Ovary (tissue), 10 donors: ENCODE measurements at regions of chr1 and their contacts with region 1.

Region 1: DNA sequence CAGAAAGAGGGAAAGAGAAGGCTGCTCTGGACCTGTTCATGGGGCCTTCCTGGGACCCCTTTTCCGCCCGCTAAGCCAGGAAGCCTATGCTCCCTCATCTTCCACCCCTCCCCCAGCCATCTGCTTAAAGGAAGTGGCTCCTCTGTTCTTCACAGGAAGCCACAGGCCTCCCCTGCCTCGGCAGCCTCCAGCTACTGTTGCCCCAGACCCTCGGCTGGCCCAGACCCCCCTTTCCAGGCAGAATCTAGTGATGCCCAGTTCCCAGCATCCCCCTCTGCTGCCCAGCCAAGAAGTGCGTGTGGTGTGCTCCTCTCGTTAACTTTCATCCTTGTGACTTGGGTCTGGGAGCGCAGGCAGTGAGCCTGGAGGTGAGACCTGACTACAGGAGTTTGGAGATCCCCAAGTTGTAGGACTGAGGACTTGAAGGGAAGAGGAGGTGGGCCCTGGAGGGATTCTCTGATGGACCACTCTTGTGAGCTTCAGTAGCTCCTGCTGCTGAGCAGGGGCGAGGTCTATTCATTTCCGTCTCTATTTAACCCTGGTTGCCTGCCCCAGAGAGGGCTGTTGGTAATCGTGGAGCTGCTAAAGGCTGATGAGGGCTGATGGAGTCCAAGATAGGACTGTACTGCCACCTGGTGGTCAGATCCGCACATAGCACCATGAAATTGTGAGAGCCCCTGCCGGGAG is 9.1 kb downstream of the IFI6 start:
- DNase-seq: peak; percentile 71 to 88 (median 86)
- H3K4me3 ChIP-seq: no peak overlapping the region
- H3K27ac ChIP-seq: no peak overlapping the region
- H3K4me1 ChIP-seq: peaks cover 8% of the 10 kb centered on the region
- H3K27me3 ChIP-seq: no peaks in the 10 kb centered on the region
- CTCF ChIP-seq: peak; percentile 88 to 96 (median 90)
- EP300 ChIP-seq: no peak
- POLR2A ChIP-seq: no peak

Region 2: DNA sequence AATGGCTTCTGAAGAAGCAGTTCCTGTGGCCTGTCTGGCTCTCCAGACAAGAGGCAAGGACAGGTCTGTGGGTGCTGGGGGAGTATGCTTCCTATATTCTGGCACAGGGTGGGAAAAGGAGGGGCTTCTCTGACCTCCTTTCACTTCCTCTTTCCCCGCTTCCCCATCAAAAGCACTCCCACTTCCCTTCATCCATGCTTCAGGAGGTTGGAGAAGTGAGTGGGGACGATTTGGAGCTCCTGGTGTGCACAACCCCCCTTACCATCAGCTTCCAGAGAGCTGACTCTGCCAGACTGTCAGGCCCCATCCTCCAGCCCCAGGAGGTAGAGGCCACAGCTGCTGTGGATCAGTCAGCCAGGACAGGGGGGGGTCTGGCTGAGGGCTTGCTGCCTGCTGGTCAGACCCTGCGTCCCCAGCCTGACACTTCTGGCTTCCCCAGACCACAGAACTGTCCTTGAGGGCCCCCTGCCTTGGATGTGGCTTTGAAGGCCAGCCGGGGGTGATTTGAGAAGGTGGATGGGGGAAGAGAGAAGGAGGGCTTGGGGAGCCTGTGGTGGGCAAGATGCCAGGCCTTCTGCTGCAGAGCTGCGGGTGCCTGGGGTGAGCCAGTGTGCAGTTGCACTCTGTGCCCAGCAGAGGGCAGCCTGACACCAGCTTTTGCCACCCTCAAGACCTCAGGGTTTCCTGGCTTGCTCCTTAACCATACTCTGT is 362.4 kb before region 1 on chr1:
- intact Hi-C with region 1: loop called in 1 of 4 experiments (anchors 5 kb)
- DNase-seq: peak; percentile 88 to 93 (median 89)
- H3K4me3 ChIP-seq: no peak overlapping the region
- H3K27ac ChIP-seq: peak overlapping the region; percentile 13 to 41
- H3K4me1 ChIP-seq: no peaks in the 10 kb centered on the region
- H3K27me3 ChIP-seq: no peaks in the 10 kb centered on the region
- CTCF ChIP-seq: peak; percentile 97 to 99 (median 98)
- EP300 ChIP-seq: no peak
- POLR2A ChIP-seq: peak; percentile 23

Region 3: DNA sequence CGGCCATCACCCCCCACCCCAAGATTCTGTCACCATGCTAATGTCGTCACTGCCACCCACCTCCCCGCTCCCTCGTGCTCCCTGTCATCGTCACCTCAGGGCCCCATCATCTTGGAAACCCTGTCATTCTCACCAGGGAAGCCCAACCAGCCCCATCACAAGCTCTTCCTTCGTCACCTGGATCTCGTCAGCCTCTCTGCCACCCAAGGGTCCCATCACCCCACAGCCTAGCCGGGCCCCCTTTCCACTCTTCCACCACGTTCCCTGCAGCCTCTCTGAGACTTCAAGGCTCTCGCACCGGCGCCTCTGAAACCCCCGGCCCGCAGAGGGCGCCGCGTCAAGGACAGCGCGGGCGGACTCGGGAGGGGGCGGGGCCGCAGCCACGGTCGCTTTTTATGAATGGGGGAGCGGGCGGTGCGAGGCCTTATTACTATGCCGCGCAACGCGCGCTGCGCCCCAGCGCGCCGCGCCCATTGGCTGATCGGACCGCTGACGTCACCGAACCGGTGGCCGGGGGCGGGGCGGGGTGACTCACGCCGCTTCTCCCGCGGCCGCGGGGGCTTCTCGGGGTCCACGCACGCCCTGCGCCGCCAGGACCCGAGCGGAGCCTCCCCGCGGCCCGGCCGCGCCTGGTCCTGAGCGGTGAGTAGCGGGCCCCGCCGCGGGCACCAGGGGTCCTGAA is 270.6 kb before region 1 on chr1 and contains the start of gene GPR3:
- intact Hi-C with region 1: loop called in 2 of 4 experiments (anchors 10 kb)
- DNase-seq: peak; percentile 87 to 95 (median 91)
- H3K4me3 ChIP-seq: peak within 1 kb of the TSS; percentile 46
- H3K27ac ChIP-seq: peak within 1 kb of the TSS; percentile 39 to 67
- H3K4me1 ChIP-seq: peaks cover 11% of the 10 kb centered on the region
- H3K27me3 ChIP-seq: no peaks in the 10 kb centered on the region
- CTCF ChIP-seq: peak; percentile 37 to 68 (median 55)
- EP300 ChIP-seq: no peak
- POLR2A ChIP-seq: no peak
- total RNA-seq, gene GPR3: 0.15 to 0.87 (median 0.41) TPM in 6 of 7 donors, not detected in the other

Region 4: GRCh38 chr1:27402349-27402754 is 260.5 kb before region 1 on chr1:
- intact Hi-C with region 1: loop called (anchors 2 to 10 kb)
- DNase-seq: peak; percentile 71 to 82 (median 72)
- H3K4me3 ChIP-seq: no peak overlapping the region
- H3K27ac ChIP-seq: peak overlapping the region in 1 of 2 donors; percentile 55
- H3K4me1 ChIP-seq: peaks cover 6% of the 10 kb centered on the region
- H3K27me3 ChIP-seq: no peaks in the 10 kb centered on the region
- CTCF ChIP-seq: peak in 2 of 3 donors; percentile 37 to 48
- EP300 ChIP-seq: no peak
- POLR2A ChIP-seq: no peak

Region 5: DNA sequence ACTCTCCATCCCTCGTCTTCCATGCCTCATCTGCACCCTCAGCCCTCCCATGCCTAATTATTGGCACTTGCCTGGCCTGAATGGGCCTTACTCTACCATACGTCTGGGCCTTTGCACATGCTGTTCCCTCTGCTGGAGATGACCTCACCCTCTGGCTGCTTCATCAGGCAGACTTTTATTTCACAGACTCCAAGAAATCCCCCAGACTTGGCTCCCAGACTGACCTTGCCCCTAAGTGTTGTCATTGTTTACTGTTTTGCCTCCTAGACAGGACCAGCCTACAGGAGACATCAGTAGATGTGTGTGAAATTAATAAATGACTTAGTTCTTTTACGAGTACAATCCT is 53.7 kb before region 1 on chr1:
- intact Hi-C with region 1: loop called (anchors 2 to 5 kb)
- DNase-seq: no peak
- H3K4me3 ChIP-seq: no peak overlapping the region
- H3K27ac ChIP-seq: no peak overlapping the region
- H3K4me1 ChIP-seq: no peaks in the 10 kb centered on the region
- H3K27me3 ChIP-seq: no peaks in the 10 kb centered on the region
- CTCF ChIP-seq: no peak
- EP300 ChIP-seq: no peak
- POLR2A ChIP-seq: no peak

Region 6: GRCh38 chr1:27614625-27615344 is 48.1 kb before region 1 on chr1:
- intact Hi-C with region 1: loop called in 3 of 4 experiments (anchors 2 to 5 kb)
- DNase-seq: peak in 1 of 5 donors; percentile 21
- H3K4me3 ChIP-seq: no peak overlapping the region
- H3K27ac ChIP-seq: no peak overlapping the region
- H3K4me1 ChIP-seq: peaks cover 3% of the 10 kb centered on the region
- H3K27me3 ChIP-seq: no peaks in the 10 kb centered on the region
- CTCF ChIP-seq: no peak
- EP300 ChIP-seq: no peak
- POLR2A ChIP-seq: no peak

Region 7: GRCh38 chr1:27713139-27713725 is 50.4 kb after region 1 on chr1:
- intact Hi-C with region 1: no loop called
- DNase-seq: no peak
- H3K4me3 ChIP-seq: no peak overlapping the region
- H3K27ac ChIP-seq: no peak overlapping the region
- H3K4me1 ChIP-seq: no peaks in the 10 kb centered on the region
- H3K27me3 ChIP-seq: no peaks in the 10 kb centered on the region
- CTCF ChIP-seq: no peak
- EP300 ChIP-seq: no peak
- POLR2A ChIP-seq: no peak

Region 8: GRCh38 chr1:27725374-27726173 is 62.7 kb after region 1 on chr1 and contains the start of gene FAM76A:
- intact Hi-C with region 1: loop called in 1 of 4 experiments (anchors 10 kb)
- DNase-seq: peak; percentile 99 to 100 (median 100)
- H3K4me3 ChIP-seq: peak within 1 kb of the TSS; percentile 76
- H3K27ac ChIP-seq: peak within 1 kb of the TSS; percentile 75 to 82
- H3K4me1 ChIP-seq: peaks cover 1% of the 10 kb centered on the region
- H3K27me3 ChIP-seq: no peaks in the 10 kb centered on the region
- CTCF ChIP-seq: peak in 2 of 3 donors; percentile 15 to 48
- EP300 ChIP-seq: no peak
- POLR2A ChIP-seq: peak; percentile 73
- total RNA-seq, gene FAM76A: 9.2 to 20.3 (median 15.7) TPM